H1 (cell line): ENCODE measurements at regions of chr16 and their contacts with region 1.

Region 1: GRCh38 chr16:4500272-4500671 is 24.1 kb downstream of the HMOX2 start:
- DNase-seq: no peak
- H3K4me3 ChIP-seq: no peak overlapping the region
- H3K27ac ChIP-seq: no peak overlapping the region
- H3K4me1 ChIP-seq: no peaks in the 10 kb centered on the region; a peak in 1 of 7 replicates
- H3K27me3 ChIP-seq: no peaks in the 10 kb centered on the region
- CTCF ChIP-seq: no peak
- EP300 ChIP-seq: no peak
- POLR2A ChIP-seq: no peak
- RAD21 ChIP-seq: no peak

Region 2: GRCh38 chr16:4475880-4476788 is 24.1 kb before region 1 on chr16 and contains the start of gene HMOX2:
- CTCF ChIA-PET with region 1: interaction called, 11 read pairs
- POLR2A ChIA-PET with region 1: interaction called, 3 read pairs
- DNase-seq: peak; percentile 90 to 98
- H3K4me3 ChIP-seq: peak within 1 kb of the TSS; percentile 48 to 81 (median 70)
- H3K27ac ChIP-seq: no peak within 1 kb of the TSS
- H3K4me1 ChIP-seq: peaks cover 0 to 9% (median 3%) of the 10 kb centered on the region in 4 experiments; a peak in 6 of 7 replicates
- H3K27me3 ChIP-seq: peaks cover 0 to 7% (median 7%) of the 10 kb centered on the region in 4 experiments; a peak in 6 of 7 replicates
- CTCF ChIP-seq: peak; percentile 42 to 58 (median 57)
- EP300 ChIP-seq: 0 out of 3 replicates have a peak, but pooled peaks of 1 of the 2 experiments have one; percentile 40
- POLR2A ChIP-seq: peak in 1 of 2 experiments; percentile 73; a peak in 2 of 3 replicates
- RAD21 ChIP-seq: peak; percentile 16 to 22; a peak in 2 of 4 replicates
- total RNA-seq, gene HMOX2: 45.6 and 48.4 TPM in 2 replicates

Region 3: GRCh38 chr16:4511441-4512082 is 11.3 kb after region 1 on chr16:
- CTCF ChIA-PET with region 1: interaction called, 163 read pairs
- POLR2A ChIA-PET with region 1: interaction called, 8 read pairs
- DNase-seq: peak in 1 of 2 experiments; percentile 91
- H3K4me3 ChIP-seq: no peak overlapping the region
- H3K27ac ChIP-seq: no peak overlapping the region; the same call in 1 of the 2 replicates
- H3K4me1 ChIP-seq: peaks cover 0 to 5% (median 2%) of the 10 kb centered on the region in 4 experiments; a peak in 6 of 7 replicates
- H3K27me3 ChIP-seq: no peaks in the 10 kb centered on the region
- CTCF ChIP-seq: peak; percentile 91 to 95 (median 92)
- EP300 ChIP-seq: no peak
- POLR2A ChIP-seq: no peak
- RAD21 ChIP-seq: peak; percentile 84